Activated CD4-positive, alpha-beta T cell treated with anti-CD3 and anti-CD28 coated beads, Interleukin-2, amount 10 ng/mL, durations not matched to agents 24 days and 14 days (primary cell): ENCODE measurements at regions of chr17 and their contacts with region 1.

Region 1: DNA sequence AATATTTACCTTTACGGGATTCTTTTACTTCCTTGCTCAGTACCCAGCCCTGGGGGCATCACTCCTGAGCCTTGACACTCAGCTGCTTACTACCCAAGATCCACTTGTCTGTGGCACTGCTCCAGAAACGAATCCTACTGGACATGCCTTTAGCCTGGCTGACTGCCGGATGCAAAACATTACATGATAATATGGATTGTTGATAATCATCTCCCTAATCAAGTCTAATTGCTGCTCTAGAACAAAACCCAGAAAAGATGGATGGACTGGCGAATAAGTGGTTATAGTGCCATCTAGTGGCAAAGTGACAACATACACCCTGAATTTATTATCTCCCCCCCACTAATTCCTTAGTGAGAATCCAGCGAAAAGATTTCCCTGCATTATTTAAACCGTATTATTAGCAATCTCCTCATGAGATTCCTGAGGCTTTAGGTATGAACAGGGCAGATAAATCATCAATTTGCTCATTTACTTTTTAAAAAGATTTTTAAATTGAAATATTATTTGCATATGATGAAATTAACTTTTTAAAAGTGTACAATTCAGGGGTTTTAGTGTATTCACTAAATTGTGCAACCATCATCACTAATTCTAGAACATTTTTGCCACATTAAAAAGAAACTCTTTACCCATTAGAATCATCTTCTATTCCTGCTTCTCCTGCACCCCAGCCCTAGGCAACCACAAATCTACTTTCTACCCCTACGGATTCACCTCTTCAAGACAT is 61.6 kb downstream of the RGS9 start:
- DNase-seq: peak; percentile 75
- H3K4me3 Mint-ChIP-seq: no peak overlapping the region
- H3K27ac Mint-ChIP-seq: no peak overlapping the region
- H3K4me1 Mint-ChIP-seq: peaks cover 24% of the 10 kb centered on the region
- H3K27me3 Mint-ChIP-seq: peaks cover 8% of the 10 kb centered on the region

Region 2: DNA sequence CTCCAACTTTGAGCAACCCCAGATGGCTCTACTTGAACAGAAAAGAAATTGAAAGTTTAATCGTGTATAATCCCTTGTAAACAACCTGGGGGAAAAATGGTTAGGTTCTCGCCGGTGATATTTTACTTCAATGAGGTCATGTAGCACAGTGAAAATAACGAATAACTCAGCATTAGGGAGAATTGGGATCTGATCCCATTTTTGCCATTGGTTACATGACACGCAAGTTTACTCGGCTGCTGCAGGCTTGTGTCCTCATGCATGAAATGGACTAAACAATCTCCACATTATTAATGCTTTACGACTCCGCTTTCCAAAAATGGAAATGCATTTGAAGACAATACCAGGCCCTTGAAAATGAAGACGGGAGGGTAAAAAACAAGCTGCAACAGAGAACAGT is 234.0 kb before region 1 on chr17:
- intact Hi-C with region 1: loop called (anchors 2 kb)
- DNase-seq: peak; percentile 34
- H3K4me3 Mint-ChIP-seq: peak overlapping the region; percentile 49
- H3K27ac Mint-ChIP-seq: peak overlapping the region; percentile 51
- H3K4me1 Mint-ChIP-seq: peaks cover 49% of the 10 kb centered on the region
- H3K27me3 Mint-ChIP-seq: no peaks in the 10 kb centered on the region

Region 3: GRCh38 chr17:65137021-65137991 is 61.5 kb before region 1 on chr17 and contains the start of gene RGS9:
- intact Hi-C with region 1: loop called (anchors 1 kb)
- DNase-seq: peak; percentile 97
- H3K4me3 Mint-ChIP-seq: peak within 1 kb of the TSS; percentile 80
- H3K27ac Mint-ChIP-seq: peak within 1 kb of the TSS; percentile 50
- H3K4me1 Mint-ChIP-seq: peaks cover 31% of the 10 kb centered on the region
- H3K27me3 Mint-ChIP-seq: peaks cover 15% of the 10 kb centered on the region
- total RNA-seq, gene RGS9: 2.2 and 3.1 TPM in 2 replicates

Region 4: GRCh38 chr17:65173284-65173793 is 25.5 kb before region 1 on chr17:
- intact Hi-C with region 1: no loop called
- DNase-seq: peak; percentile 93
- H3K4me3 Mint-ChIP-seq: no peak overlapping the region
- H3K27ac Mint-ChIP-seq: no peak overlapping the region
- H3K4me1 Mint-ChIP-seq: peaks cover 33% of the 10 kb centered on the region
- H3K27me3 Mint-ChIP-seq: no peaks in the 10 kb centered on the region